ENCODE measurements at regions of chr4 and their contacts with region 1.

Region 1: DNA sequence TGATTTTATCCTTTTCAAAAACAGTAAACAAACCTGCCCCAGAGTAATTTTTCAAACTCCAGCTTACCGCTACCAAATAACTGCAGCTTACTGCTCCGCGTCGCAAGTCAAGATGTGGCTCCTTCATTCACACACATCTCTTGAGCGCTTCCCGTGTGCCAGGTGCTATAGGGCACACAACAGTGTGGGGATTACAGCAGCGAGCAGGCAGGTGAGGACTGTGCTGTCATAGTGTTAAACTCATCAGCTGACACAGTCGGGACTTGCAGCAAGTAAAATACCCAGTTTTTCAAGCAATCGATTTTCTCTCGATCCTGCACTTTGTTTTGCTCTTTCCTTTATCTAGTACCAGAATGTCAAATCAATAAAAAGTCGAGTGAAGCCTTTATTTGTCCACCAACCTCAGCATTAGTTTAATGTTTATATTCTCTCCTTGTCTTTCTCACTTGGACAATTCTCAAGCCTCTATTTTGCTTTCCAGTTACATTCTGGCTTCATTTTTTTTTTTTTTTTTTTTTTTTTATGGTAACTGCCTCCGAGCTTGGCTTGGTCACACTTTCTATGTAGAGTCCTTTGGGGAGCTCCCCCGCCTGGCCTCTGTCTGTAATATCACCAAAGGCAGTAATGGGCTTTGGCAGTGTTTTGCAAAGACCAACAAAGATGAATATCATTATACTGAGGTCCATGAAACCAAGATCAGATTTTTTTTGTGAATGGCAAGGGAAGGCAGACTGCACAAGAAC is 8.3 kb upstream of the ASB5 start:
- DNase-seq: peak; percentile 52
- ATAC-seq: peak; percentile 91

Region 2: DNA sequence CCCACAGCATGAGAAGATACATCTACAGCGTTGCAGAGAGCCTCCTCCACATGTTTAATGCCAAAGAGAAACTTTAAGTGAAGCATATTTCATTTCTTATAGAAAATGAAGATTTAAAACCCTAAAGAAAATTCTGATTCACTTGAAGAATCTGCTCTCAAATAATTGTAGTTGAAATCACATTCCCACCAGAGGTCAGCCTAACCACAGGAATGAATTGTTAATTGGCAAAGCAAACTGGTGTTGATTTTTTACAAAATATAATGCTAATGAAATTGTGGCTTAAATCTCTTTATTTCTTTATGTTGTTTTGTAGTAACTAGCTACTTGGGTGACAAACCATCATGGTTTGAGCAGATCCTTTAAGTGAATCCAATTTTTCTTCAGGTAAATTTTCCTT is 242.8 kb before region 1 on chr4:
- intact Hi-C with region 1: no loop called
- DNase-seq: no peak
- ATAC-seq: no peak

Region 3: DNA sequence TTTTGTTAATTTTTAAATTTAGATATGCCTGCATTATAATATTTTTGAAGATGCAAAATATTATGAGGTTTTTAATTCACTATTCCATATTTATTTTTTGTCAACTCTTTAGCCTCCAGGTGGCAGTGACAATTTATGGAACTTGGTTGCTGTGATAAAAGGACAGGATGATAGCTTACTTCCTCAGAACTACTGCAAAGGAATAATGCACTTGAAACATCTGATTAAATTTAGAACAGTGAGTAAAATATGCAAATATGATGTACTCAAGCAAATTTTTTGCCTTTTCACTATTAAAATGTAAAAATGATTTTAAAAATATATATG is 127.0 kb before region 1 on chr4:
- intact Hi-C with region 1: loop called (anchors 5 kb)
- DNase-seq: no peak
- ATAC-seq: peak; percentile 65

Region 4: DNA sequence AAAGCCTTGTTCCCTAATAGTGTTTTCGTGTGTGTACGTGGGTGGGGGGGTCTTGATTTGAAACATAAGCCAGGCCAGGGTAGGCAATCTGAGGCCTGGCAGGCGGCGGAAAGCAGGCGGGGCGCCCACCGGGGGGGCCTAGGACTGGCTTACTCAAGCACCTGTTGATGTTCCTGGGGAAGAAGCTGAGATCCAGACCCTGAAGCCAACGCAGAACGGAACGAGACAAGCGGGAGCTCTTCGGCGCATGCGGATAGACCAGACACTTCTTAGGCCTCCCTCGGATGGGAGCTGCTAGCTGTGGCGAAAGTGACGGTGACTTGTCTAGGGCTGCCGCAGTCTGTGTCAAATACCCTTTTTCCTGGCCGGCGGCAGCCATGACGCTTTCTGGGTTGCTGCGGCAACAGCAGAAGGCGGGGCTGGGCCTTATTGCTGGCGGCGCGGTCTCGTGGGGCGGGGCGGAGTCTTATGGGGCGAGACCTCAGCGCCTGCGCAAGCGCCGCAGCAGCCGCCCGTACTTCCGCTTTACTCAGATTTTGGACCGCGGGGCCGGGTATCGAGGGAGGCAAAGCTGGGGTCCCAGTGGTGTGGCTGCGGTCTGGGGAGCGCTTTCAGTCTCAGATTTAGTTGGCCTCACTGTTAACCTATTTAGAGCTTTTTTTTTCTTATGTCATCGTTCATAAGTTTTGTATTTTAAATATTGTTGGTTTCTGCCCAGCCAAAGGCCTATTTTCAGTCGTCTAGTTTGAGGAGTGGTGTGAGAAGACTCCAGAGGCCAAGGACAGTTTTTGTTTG is 82.0 kb before region 1 on chr4 and contains the start of gene SPATA4:
- intact Hi-C with region 1: loop called (anchors 10 kb)
- DNase-seq: peak; percentile 98
- ATAC-seq: peak; percentile 100
- total RNA-seq, gene SPATA4: 0.32 TPM

Region 5: DNA sequence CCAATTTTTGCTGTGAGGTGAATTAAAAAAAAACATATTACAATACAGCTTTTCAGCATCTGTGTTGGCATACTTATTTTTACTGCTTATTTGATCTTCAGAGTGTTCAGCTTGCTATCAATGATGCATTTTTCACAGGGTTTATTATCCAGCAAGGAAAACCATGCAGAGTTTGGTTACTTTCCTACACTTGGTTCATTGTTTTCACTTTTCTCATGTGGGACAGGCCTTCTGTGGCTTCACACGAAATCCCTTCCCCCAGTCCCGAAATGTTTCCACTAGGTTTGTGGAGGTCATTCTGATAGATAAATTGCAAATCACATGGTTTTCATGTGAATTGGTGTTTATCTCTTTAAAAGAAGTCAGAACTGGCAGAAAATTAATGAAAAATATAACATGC is 248.2 kb after region 1 on chr4:
- intact Hi-C with region 1: no loop called
- DNase-seq: no peak
- ATAC-seq: no peak